ENCODE measurements at regions of chr11 and their contacts with region 1.

Region 1: GRCh38 chr11:65314501-65315203 is at the start of gene CDC42EP2:
- DNase-seq: peak; percentile 79
- ATAC-seq: peak; percentile 96
- H3K4me3 Mint-ChIP-seq: peak within 1 kb of the TSS; percentile 70
- H3K27ac Mint-ChIP-seq: no peak within 1 kb of the TSS
- H3K4me1 Mint-ChIP-seq: peaks cover 6% of the 10 kb centered on the region
- H3K27me3 Mint-ChIP-seq: peaks cover 12% of the 10 kb centered on the region
- total RNA-seq, gene CDC42EP2: 1.4 TPM in 1 of 2 experiments, not detected in the other

Region 2: GRCh38 chr11:65111744-65112414 is 202.8 kb before region 1 on chr11 and contains the start of gene TM7SF2:
- CTCF ChIA-PET with region 1: interaction called, 24 read pairs
- DNase-seq: peak; percentile 97
- ATAC-seq: peak; percentile 83
- H3K4me3 Mint-ChIP-seq: peak within 1 kb of the TSS; percentile 80
- H3K27ac Mint-ChIP-seq: peak within 1 kb of the TSS; percentile 85
- H3K4me1 Mint-ChIP-seq: peaks cover 49% of the 10 kb centered on the region
- H3K27me3 Mint-ChIP-seq: no peaks in the 10 kb centered on the region
- total RNA-seq, gene TM7SF2: 21.0 to 26.2 TPM

Region 3: GRCh38 chr11:65204646-65205601 is 109.7 kb before region 1 on chr11:
- CTCF ChIA-PET with region 1: interaction called, 43 read pairs
- DNase-seq: peak; percentile 55
- ATAC-seq: peak; percentile 63
- H3K4me3 Mint-ChIP-seq: no peak overlapping the region
- H3K27ac Mint-ChIP-seq: no peak overlapping the region
- H3K4me1 Mint-ChIP-seq: peaks cover 8% of the 10 kb centered on the region
- H3K27me3 Mint-ChIP-seq: no peaks in the 10 kb centered on the region

Region 4: DNA sequence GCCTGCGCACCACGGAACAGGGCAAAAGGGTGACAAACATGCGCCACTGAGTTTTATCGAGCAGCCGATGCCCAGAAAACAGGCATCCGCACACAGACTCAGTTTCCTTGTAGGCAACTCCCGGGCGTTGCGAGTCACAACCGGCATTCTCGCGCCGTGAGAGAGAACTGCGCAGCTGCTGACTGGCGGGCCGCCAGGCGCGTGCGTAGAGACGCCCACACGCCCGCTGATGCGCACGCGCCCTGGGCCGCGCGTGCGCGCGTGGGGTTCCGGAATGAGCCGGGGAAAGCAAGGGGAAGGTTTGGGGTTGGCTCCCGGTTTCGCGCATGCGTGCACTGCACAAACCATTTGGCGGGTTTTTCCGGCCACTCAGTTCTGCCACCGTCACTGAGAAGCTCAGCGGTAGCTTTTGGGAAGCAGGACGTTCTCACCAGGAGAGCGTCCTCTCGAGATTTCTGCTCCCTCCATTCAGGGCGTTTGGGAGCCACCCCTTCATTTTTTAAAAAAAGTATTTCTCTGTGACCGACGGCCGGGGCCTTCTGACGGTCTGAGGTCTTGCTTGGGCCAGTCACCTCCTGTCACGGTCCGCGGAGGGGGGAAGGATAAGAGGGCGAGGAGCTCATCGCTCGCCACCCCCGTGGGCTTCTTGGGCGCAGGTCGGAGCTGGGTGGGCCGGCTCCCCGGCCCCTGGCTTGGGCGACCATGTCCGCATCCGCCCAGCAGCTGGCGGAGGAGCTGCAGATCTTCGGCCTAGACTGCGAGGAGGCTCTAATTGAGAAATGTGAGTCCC is 52.9 kb before region 1 on chr11 and contains the start of gene POLA2:
- CTCF ChIA-PET with region 1: interaction called, 25 read pairs
- DNase-seq: peak; percentile 97
- ATAC-seq: peak; percentile 96
- H3K4me3 Mint-ChIP-seq: peak within 1 kb of the TSS; percentile 94
- H3K27ac Mint-ChIP-seq: peak within 1 kb of the TSS; percentile 93
- H3K4me1 Mint-ChIP-seq: peaks cover 49% of the 10 kb centered on the region
- H3K27me3 Mint-ChIP-seq: no peaks in the 10 kb centered on the region
- total RNA-seq, gene POLA2: 79.8 to 89.5 TPM

Region 5: GRCh38 chr11:65293909-65294381 is 20.7 kb before region 1 on chr11:
- CTCF ChIA-PET with region 1: interaction called, 17 read pairs
- DNase-seq: no peak
- ATAC-seq: no peak
- H3K4me3 Mint-ChIP-seq: no peak overlapping the region
- H3K27ac Mint-ChIP-seq: no peak overlapping the region
- H3K4me1 Mint-ChIP-seq: peaks cover 5% of the 10 kb centered on the region
- H3K27me3 Mint-ChIP-seq: no peaks in the 10 kb centered on the region

Region 6: DNA sequence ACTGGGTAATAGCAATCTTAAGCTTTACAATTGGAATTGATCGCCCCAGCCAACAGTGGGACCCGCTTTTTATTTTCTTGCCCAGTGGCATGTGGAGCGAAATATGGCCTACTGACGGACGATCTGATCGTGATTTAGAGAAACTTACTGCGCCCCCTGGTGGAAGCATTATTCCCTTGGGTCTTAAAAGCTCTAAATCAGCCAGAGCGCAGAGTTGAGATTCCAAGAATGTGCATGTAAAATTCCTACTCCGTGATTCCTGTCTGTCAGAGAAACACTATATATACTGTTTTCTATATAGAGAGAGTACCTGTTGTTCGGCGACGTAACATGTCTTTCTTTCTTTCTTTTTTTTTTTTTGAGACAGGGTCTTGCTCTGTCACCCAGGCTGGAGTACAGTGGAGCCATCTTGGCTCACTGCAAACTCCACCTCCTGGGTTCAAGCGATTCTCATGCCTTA is 15.3 kb after region 1 on chr11:
- CTCF ChIA-PET with region 1: interaction called, 200 read pairs
- DNase-seq: peak; percentile 89
- ATAC-seq: no peak
- H3K4me3 Mint-ChIP-seq: no peak overlapping the region
- H3K27ac Mint-ChIP-seq: no peak overlapping the region
- H3K4me1 Mint-ChIP-seq: peaks cover 15% of the 10 kb centered on the region
- H3K27me3 Mint-ChIP-seq: peaks cover 6% of the 10 kb centered on the region

Region 7: GRCh38 chr11:65606876-65607613 is 292.4 kb after region 1 on chr11:
- CTCF ChIA-PET with region 1: no interaction called
- DNase-seq: no peak
- ATAC-seq: no peak
- H3K4me3 Mint-ChIP-seq: no peak overlapping the region
- H3K27ac Mint-ChIP-seq: no peak overlapping the region
- H3K4me1 Mint-ChIP-seq: peaks cover 27% of the 10 kb centered on the region
- H3K27me3 Mint-ChIP-seq: no peaks in the 10 kb centered on the region

Measured in activated CD8-positive, alpha-beta memory T cell treated with anti-CD3 and anti-CD28 coated beads, Interleukin-2, amount 10 ng/mL, durations not matched to agents 7 days and 5 days (primary cell).